Heart right ventricle (tissue), 16 donors: ENCODE measurements at regions of chr10 and their contacts with region 1.

Region 1: DNA sequence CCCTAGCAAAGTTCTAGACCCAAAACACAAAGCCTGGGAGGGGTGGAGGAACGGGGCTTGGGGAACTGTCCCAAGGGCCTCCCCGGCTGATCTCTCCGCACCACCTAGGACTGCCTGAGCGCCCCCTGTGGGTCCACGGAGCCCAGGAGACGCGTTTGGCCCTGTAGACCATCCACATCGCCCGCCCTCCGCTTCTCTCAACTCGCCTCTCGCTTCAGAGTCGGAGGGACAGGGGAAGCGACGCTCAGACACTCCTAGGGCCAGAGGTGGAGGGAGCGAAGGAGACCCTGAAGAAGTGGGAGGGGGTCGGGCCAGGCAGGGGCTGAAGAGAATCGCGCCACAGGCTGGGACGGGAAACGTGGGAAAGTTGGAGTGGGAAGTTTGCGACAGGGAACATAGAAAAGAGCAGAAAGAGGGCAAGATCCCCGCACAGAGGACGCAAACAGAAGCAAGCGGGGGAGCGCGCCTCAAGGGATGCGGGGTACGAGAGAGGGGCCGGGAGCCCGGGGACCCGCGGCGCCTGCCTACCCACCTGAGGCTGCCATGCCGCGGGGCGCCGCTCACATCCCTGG is 378 bp downstream of the PIK3AP1 start:
- DNase-seq: peak; percentile 47 to 67
- ATAC-seq: peak; percentile 68 to 83 (median 72)
- H3K4me3 ChIP-seq: peak overlapping the region; percentile 26 to 74 (median 60)
- H3K27ac ChIP-seq: peak overlapping the region in 6 of 10 donors; percentile 25 to 92 (median 58)
- H3K4me1 ChIP-seq: peaks cover 0 to 39% (median 9%) of the 10 kb centered on the region in 9 donors
- H3K27me3 ChIP-seq: peaks cover 0 to 22% (median 0%) of the 10 kb centered on the region in 7 donors
- CTCF ChIP-seq: peak in 6 of 9 donors; percentile 6 to 62 (median 51)

Region 2: GRCh38 chr10:96651998-96652431 is 67.9 kb before region 1 on chr10:
- intact Hi-C with region 1: loop called in 2 of 10 experiments (anchors 10 kb)
- DNase-seq: peak in 1 of 2 donors; percentile 23
- ATAC-seq: peak in 5 of 8 donors; percentile 35 to 65 (median 58)
- H3K4me3 ChIP-seq: no peak overlapping the region
- H3K27ac ChIP-seq: peak overlapping the region in 1 of 10 donors; percentile 64
- H3K4me1 ChIP-seq: peaks cover 0 to 46% (median 0%) of the 10 kb centered on the region in 9 donors
- H3K27me3 ChIP-seq: peaks cover 0 to 4% (median 0%) of the 10 kb centered on the region in 7 donors
- CTCF ChIP-seq: no peak